ENCODE measurements at regions of chr3 and their contacts with region 1.

Region 1: GRCh38 chr3:191296041-191296541 is 33.1 kb upstream of the CCDC50 start:
- DNase-seq: peak; percentile 86
- ATAC-seq: peak; percentile 86
- H3K4me3 ChIP-seq: peak overlapping the region in 1 of 5 experiments; percentile 22
- H3K4me3 Mint-ChIP-seq: no peak overlapping the region
- H3K27ac ChIP-seq: peak overlapping the region; percentile 63 to 75
- H3K27ac Mint-ChIP-seq: no peak overlapping the region
- H3K4me1 ChIP-seq: peaks cover 84% of the 10 kb centered on the region in 2 donors
- H3K4me1 Mint-ChIP-seq: peaks cover 50% of the 10 kb centered on the region
- H3K27me3 ChIP-seq: no peaks in the 10 kb centered on the region
- H3K27me3 Mint-ChIP-seq: no peaks in the 10 kb centered on the region
- CTCF ChIP-seq: no peak

Region 2: DNA sequence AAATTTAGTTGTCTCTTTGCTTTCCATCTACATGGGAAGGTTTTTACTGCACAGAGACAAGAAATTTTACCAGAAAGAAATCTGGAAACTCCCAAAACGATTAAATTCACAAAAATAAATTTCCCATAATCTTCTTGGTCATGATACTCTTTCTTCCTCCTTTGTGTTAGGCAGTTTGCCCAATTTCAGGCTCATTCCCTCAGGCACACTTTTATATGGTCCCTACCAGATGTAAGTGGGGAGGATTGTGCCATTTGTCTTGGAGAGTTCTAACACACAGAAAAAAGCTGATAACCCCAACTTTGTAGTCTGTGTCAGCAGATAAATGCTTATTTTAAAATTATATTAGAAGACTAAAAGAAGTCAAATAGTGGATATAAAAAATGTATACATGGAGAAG is 16.0 kb before region 1 on chr3:
- CTCF ChIA-PET with region 1: interaction called, 3 read pairs
- POLR2A ChIA-PET with region 1: interaction called, 3 read pairs
- intact Hi-C with region 1: loop called (anchors 2 kb)
- DNase-seq: no peak
- ATAC-seq: no peak
- H3K4me3 ChIP-seq: no peak overlapping the region
- H3K4me3 Mint-ChIP-seq: no peak overlapping the region
- H3K27ac ChIP-seq: no peak overlapping the region
- H3K27ac Mint-ChIP-seq: no peak overlapping the region
- H3K4me1 ChIP-seq: peaks cover 0 to 4% of the 10 kb centered on the region in 2 donors
- H3K4me1 Mint-ChIP-seq: peaks cover 24% of the 10 kb centered on the region
- H3K27me3 ChIP-seq: no peaks in the 10 kb centered on the region
- H3K27me3 Mint-ChIP-seq: no peaks in the 10 kb centered on the region
- CTCF ChIP-seq: no peak

Region 3: GRCh38 chr3:192068464-192069254 is 772.6 kb after region 1 on chr3:
- CTCF ChIA-PET with region 1: no interaction called
- POLR2A ChIA-PET with region 1: no interaction called
- intact Hi-C with region 1: no loop called
- DNase-seq: no peak
- ATAC-seq: no peak
- H3K4me3 ChIP-seq: peak overlapping the region in 1 of 5 experiments; percentile 7
- H3K4me3 Mint-ChIP-seq: peak overlapping the region; percentile 0
- H3K27ac ChIP-seq: peak overlapping the region in 1 of 2 donors; percentile 19
- H3K27ac Mint-ChIP-seq: peak overlapping the region; percentile 46
- H3K4me1 ChIP-seq: peaks cover 0 to 3% of the 10 kb centered on the region in 2 donors
- H3K4me1 Mint-ChIP-seq: peaks cover 21% of the 10 kb centered on the region
- H3K27me3 ChIP-seq: no peaks in the 10 kb centered on the region
- H3K27me3 Mint-ChIP-seq: no peaks in the 10 kb centered on the region
- CTCF ChIP-seq: no peak